Activated CD8-positive, alpha-beta T cell treated with anti-CD3 and anti-CD28 coated beads, Interleukin-2, amount 10 ng/mL, durations not matched to agents 7 days and 5 days (primary cell): ENCODE measurements at regions of chr18 and their contacts with region 1.

Region 1: DNA sequence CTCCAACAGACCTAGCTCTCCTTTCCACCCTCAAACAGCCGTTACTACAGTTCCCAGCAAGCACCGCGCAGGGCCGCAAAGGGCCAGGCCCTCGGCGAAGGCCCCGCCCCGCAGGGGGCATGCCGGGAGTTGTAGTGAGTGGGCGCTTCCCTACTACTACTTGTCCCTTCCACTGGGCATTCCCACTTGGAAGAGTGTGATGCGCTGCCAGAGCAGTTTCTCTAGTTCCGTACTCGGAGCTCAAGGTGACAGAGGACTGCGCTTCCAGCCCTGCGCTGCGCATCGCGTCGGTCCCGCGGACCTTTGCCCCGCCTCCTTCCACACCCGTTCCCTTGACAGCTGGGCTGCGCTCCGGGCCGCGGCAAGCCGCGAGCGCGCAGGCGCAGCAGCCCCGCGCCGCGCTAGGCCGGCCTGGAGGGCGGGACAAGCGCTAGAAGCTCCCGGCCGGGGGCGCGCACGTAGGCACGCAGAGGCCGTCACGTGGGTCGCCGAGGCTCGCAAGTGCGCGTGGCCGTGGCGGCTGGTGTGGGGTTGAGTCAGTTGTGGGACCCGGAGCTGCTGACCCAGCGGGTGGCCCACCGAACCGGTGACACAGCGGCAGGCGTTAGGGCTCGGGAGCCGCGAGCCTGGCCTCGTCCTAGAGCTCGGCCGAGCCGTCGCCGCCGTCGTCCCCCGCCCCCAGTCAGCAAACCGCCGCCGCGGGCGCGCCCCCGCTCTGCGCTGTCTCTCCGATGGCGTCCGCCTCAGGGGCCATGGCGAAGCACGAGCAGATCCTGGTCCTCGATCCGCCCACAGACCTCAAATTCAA is at the start of gene VAPA:
- DNase-seq: peak; percentile 94
- ATAC-seq: peak; percentile 88
- H3K4me3 Mint-ChIP-seq: peak within 1 kb of the TSS; percentile 84
- H3K27ac Mint-ChIP-seq: peak within 1 kb of the TSS; percentile 93
- H3K4me1 Mint-ChIP-seq: peaks cover 25% of the 10 kb centered on the region
- H3K27me3 Mint-ChIP-seq: peaks cover 9% of the 10 kb centered on the region
- total RNA-seq, gene VAPA: 138 to 142 TPM

Region 2: DNA sequence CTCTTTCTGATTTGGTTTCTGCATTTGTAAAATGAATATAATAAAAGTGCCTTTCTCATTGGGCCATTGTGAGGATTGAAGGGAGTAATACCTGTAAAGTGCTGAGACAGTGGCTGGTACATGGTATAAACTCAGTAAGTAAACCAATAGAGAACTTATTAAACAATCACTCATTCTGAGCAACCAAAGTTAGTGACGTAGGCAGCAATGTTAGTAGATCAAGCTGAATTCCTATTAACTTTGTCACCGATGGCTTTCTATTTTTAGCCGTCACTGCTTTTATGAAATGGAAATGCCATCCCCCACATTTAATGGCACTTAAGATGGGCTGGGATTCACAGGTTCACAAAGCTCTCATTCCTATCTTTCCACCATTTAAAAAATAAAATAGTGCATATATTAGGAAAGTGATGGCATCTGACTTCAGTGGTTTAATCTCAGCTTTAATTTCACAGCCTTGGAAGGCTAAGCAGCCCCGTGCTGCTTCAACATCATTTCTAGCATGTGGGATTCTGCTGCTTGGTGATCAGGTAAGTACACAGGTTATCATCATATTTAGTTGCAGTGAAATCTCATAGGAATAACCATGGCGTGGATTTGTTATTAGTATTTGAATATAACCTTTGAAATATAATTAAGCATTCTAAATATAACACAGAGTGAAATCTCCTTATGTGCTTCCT is 281.8 kb before region 1 on chr18:
- CTCF ChIA-PET with region 1: no interaction called
- POLR2A ChIA-PET with region 1: no interaction called
- DNase-seq: no peak
- ATAC-seq: no peak
- H3K4me3 Mint-ChIP-seq: no peak overlapping the region
- H3K27ac Mint-ChIP-seq: no peak overlapping the region
- H3K4me1 Mint-ChIP-seq: no peaks in the 10 kb centered on the region
- H3K27me3 Mint-ChIP-seq: peaks cover 12% of the 10 kb centered on the region

Region 3: DNA sequence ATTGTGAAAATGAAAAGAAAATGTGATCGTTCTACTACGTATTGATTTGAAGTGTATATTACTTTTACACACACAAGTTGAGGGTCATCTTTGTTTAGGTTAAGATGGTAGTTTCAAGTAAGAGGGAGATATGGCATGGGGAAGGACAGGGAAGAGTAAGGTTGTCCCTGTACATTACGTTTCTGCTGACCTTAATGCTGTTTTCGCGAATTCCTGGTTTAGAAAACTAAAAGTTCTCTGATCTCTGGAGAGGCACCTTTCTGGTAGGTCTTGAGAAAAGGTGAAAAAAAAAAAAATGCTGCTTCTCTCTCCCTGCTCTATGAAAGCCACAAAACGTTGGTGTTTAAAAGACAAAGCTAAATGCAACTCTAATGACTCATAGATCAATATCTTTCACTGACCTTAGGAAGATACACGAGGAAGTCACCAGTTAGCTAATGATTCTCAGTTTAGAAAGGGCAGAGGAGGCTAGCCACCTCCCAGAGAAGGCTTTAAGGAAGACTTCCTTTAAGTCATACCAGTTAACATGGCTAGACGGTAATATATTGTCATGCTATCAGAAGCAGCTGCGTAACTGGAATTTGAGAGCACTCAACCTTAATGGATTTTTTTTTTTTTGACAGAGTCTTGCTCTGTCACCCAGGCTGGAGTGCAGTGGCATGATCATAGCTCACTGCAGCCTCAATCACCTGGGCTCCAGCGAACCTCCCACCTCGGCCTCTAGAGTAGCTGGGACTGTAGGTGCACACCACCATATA is 14.8 kb before region 1 on chr18:
- CTCF ChIA-PET with region 1: no interaction called
- POLR2A ChIA-PET with region 1: interaction called, 10 read pairs
- DNase-seq: no peak
- ATAC-seq: no peak
- H3K4me3 Mint-ChIP-seq: no peak overlapping the region
- H3K27ac Mint-ChIP-seq: no peak overlapping the region
- H3K4me1 Mint-ChIP-seq: peaks cover 14% of the 10 kb centered on the region
- H3K27me3 Mint-ChIP-seq: peaks cover 6% of the 10 kb centered on the region

Region 4: GRCh38 chr18:9941103-9941502 is 27.4 kb after region 1 on chr18:
- CTCF ChIA-PET with region 1: no interaction called
- POLR2A ChIA-PET with region 1: no interaction called
- DNase-seq: no peak
- ATAC-seq: no peak
- H3K4me3 Mint-ChIP-seq: no peak overlapping the region
- H3K27ac Mint-ChIP-seq: no peak overlapping the region
- H3K4me1 Mint-ChIP-seq: peaks cover 5% of the 10 kb centered on the region
- H3K27me3 Mint-ChIP-seq: no peaks in the 10 kb centered on the region

Region 5: DNA sequence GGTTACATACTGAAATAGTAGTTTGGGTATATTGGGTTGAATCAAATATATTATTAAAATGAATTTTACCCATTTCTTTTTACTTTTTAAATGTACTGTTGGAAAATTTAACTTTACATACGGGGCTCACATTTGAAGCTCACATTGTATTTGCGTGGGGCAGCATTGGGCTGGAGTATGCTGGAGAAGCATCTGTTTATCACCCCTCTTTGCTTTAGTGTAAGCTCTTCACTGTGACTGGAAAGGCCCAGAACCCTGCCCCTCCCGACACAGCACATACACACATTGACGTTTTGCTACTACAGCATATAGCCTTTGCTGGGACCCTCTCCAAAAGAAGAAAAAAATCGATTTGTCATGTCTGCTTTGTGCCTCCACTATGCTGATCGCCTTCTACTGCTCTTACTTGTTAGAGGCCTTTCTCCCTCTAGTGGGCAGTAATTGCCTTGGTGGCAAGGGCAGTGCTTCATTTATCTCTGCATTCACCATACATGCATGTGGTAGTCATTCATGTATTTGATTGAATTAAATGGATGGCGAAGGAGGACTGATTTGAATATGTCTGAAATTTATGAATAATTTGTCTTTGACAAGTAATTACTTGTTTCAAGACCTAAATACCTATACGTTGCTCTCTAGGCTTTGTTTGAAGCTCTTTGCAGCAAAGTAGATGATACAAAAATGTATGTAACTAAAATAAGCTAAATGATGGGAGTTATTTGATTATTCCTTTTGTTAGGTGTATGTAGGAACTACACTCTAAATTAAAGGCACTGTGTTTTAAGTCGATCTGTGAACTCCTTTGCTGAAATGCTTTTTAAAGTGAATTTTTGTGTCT is 37.5 kb after region 1 on chr18:
- CTCF ChIA-PET with region 1: interaction called, 10 read pairs
- POLR2A ChIA-PET with region 1: no interaction called
- DNase-seq: peak; percentile 32
- ATAC-seq: peak; percentile 60
- H3K4me3 Mint-ChIP-seq: no peak overlapping the region
- H3K27ac Mint-ChIP-seq: no peak overlapping the region
- H3K4me1 Mint-ChIP-seq: no peaks in the 10 kb centered on the region
- H3K27me3 Mint-ChIP-seq: no peaks in the 10 kb centered on the region